AG04450 (cell line): ENCODE measurements at regions of chr7 and their contacts with region 1.

Region 1: GRCh38 chr7:80047856-80048459 is 86.7 kb upstream of the GNAI1 start:
- DNase-seq: no peak
- H3K4me3 ChIP-seq: no peak overlapping the region
- H3K27ac ChIP-seq: no peak overlapping the region
- H3K27me3 ChIP-seq: no peaks in the 10 kb centered on the region
- CTCF ChIP-seq: peak; percentile 50

Region 2: DNA sequence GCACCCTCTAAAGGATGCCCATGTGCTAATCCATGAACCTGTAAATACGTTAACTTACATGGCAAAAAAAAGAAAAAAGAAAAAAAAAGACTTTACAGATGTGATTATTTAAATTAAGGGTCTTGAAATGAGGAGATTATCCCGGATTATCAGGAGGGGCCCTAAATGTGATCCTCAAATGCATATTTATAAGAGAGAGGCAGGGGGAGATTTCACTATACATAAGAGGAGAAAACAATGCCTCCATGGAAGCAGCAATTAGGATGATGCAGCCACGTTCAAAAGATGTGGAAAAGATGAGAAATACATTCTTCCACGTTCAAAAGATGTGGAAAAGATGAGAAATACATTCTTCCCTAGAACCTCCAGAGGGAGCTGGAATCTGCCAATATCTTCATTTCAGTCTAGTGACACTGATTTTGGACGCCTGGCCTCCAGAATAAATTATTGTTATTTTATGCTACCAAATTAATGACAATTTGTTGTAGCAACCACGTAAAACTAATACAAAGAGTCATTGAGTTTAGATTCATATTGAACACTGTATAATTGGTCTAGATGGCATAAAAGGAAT is 241.7 kb before region 1 on chr7:
- CTCF ChIA-PET with region 1: interaction called, 11 read pairs
- POLR2A ChIA-PET with region 1: no interaction called
- DNase-seq: no peak
- H3K4me3 ChIP-seq: no peak overlapping the region
- H3K27ac ChIP-seq: no peak overlapping the region
- H3K27me3 ChIP-seq: no peaks in the 10 kb centered on the region
- CTCF ChIP-seq: peak; percentile 62

Region 3: GRCh38 chr7:80070391-80070790 is 22.4 kb after region 1 on chr7:
- CTCF ChIA-PET with region 1: no interaction called
- POLR2A ChIA-PET with region 1: no interaction called
- DNase-seq: no peak
- H3K4me3 ChIP-seq: no peak overlapping the region
- H3K27ac ChIP-seq: no peak overlapping the region
- H3K27me3 ChIP-seq: no peaks in the 10 kb centered on the region
- CTCF ChIP-seq: no peak

Region 4: GRCh38 chr7:80087051-80087770 is 39.3 kb after region 1 on chr7:
- CTCF ChIA-PET with region 1: no interaction called
- POLR2A ChIA-PET with region 1: no interaction called
- DNase-seq: peak; percentile 59
- H3K4me3 ChIP-seq: no peak overlapping the region
- H3K27ac ChIP-seq: peak overlapping the region; percentile 77
- H3K27me3 ChIP-seq: no peaks in the 10 kb centered on the region
- CTCF ChIP-seq: no peak

Region 5: GRCh38 chr7:80165177-80165576 is 117.2 kb after region 1 on chr7:
- CTCF ChIA-PET with region 1: no interaction called
- POLR2A ChIA-PET with region 1: no interaction called
- DNase-seq: no peak
- H3K4me3 ChIP-seq: no peak overlapping the region
- H3K27ac ChIP-seq: no peak overlapping the region
- H3K27me3 ChIP-seq: no peaks in the 10 kb centered on the region
- CTCF ChIP-seq: no peak